Activated CD4-positive, alpha-beta T cell treated with anti-CD3 and anti-CD28 coated beads, Interleukin-2, amount 10 ng/mL, durations not matched to agents 24 days and 14 days (primary cell): ENCODE measurements at regions of chr2 and their contacts with region 1.

Region 1: DNA sequence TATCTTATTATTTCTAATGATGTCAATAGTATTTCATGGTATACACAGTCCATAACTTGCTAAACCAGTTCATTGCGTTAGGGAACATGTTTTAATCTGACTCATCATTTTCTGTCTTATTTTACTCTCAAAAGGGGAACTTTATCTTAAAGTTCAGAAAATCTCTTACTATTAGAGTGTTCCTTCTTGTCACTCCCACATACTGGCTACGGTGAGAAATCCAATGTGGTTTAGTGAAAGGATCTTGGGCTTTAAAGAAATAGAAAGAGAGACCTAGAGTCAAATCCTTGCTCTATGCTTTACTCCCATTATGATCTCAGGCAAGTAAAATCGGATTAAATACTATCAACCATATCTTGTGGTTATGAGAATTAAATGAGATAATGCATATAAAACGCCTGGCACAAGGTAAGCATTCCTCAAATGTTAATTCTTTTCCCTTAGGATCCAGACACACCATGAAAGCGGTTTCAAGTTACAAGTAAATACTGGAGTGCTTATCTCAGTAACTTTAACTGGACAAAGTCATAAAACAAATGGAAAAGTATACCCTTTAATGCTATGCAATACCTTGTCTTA is 576.0 kb downstream of the ARHGAP15 start:
- DNase-seq: no peak
- H3K4me3 Mint-ChIP-seq: no peak overlapping the region
- H3K27ac Mint-ChIP-seq: peak overlapping the region; percentile 25
- H3K4me1 Mint-ChIP-seq: peaks cover 16% of the 10 kb centered on the region
- H3K27me3 Mint-ChIP-seq: no peaks in the 10 kb centered on the region

Region 2: DNA sequence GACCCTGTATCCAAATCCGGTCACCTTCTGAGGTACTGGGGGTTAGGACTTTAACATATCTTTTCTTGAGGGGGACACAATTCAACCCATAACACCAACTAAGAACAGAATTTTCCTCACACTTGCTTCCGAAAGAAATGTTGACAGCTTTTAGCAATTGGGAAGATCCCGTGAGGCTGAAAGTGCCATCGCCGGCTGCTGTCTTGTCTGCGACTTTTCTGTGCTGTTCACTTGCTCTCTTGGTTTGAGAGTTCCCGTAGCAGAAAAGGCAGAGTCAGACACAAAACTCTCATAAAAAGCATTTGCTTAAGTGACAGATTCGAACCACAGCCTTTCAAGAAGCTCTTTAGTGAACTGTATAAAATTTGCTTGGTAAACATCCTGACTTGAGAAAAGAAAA is 322.6 kb before region 1 on chr2:
- intact Hi-C with region 1: no loop called
- DNase-seq: no peak
- H3K4me3 Mint-ChIP-seq: no peak overlapping the region
- H3K27ac Mint-ChIP-seq: no peak overlapping the region
- H3K4me1 Mint-ChIP-seq: no peaks in the 10 kb centered on the region
- H3K27me3 Mint-ChIP-seq: no peaks in the 10 kb centered on the region

Region 3: DNA sequence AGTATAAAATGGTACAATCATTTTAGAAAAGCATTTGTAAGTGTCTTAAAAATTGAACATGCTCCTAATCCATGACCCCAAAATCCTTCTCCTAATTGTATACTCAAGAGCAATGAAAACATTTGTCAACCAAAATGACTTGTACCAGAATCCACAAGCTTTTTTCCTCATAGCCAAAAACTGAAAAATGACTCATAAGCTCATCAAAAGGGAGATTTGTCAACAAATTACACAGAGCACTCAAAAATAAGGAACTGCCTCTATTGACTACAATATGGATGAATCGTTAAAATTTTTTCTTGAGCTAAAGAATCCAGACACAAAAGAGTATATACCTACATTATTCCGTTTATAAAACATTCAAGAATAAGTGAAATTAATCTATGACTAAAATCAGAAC is 31.1 kb before region 1 on chr2:
- intact Hi-C with region 1: loop called (anchors 1 kb)
- DNase-seq: no peak
- H3K4me3 Mint-ChIP-seq: no peak overlapping the region
- H3K27ac Mint-ChIP-seq: peak overlapping the region; percentile 13
- H3K4me1 Mint-ChIP-seq: peaks cover 3% of the 10 kb centered on the region
- H3K27me3 Mint-ChIP-seq: no peaks in the 10 kb centered on the region

Region 4: DNA sequence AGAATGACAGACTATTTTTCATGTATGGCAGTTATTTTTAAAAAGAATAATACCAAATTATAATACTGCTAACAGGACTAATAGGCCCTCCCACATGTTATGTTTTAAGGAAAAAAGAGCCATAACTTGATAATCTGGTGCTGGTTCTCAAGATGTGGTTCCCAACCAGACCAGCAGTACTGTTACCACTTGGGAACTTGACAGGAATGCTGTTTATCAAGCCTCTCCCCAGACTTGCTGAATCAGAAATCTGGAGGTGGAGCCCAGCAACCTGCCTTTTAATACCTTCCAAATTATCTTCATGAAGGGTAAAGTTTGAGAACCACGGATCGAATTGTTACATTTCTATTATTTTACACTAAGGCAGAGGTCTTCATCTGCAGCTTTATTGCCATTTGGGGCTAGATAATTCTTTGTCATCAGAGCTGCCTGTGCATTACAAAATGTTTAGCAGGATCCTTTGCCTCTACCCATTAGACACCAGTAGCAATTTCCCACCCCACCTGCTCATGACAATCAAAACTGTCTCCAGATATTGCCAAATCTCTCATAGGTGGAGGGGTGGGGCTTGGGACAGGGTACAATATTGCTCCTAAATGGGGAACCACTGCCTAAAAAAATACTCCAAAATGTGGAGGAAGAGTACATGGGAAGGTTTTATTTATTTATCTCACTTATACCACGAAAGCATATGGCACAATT is 53.6 kb after region 1 on chr2:
- intact Hi-C with region 1: no loop called
- DNase-seq: no peak
- H3K4me3 Mint-ChIP-seq: no peak overlapping the region
- H3K27ac Mint-ChIP-seq: no peak overlapping the region
- H3K4me1 Mint-ChIP-seq: no peaks in the 10 kb centered on the region
- H3K27me3 Mint-ChIP-seq: no peaks in the 10 kb centered on the region

Region 5: DNA sequence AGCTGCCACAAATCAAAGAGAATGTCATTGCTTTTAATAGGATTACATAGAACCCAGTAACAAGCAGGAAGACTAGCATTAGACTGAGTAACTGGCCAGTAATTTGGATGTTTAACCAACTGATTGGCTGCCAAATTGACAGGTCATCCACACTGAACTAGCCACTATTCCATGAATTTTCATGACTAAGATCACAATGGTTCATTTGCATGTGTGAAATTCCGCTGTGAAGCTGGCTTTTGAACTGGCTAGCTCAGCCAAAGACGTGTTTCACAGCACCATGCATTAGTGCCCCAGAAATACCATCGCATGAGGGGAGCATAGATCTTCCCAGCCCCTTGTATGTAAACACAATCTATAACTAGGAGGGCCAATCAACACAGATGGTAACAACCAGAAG is 73.8 kb after region 1 on chr2:
- intact Hi-C with region 1: no loop called
- DNase-seq: no peak
- H3K4me3 Mint-ChIP-seq: no peak overlapping the region
- H3K27ac Mint-ChIP-seq: no peak overlapping the region
- H3K4me1 Mint-ChIP-seq: no peaks in the 10 kb centered on the region
- H3K27me3 Mint-ChIP-seq: peaks cover 9% of the 10 kb centered on the region